Pancreas (tissue), 10 donors: ENCODE measurements at regions of chr13 and their contacts with region 1.

Region 1: GRCh38 chr13:40069173-40070044 is 413.9 kb downstream of the COG6 start:
- DNase-seq: peak; percentile 57 to 83 (median 69)
- ATAC-seq: peak; percentile 86 to 97 (median 94)
- H3K4me3 ChIP-seq: peak overlapping the region in 1 of 4 donors; percentile 15
- H3K27ac ChIP-seq: no peak overlapping the region
- H3K4me1 ChIP-seq: peaks cover 0 to 11% (median 8%) of the 10 kb centered on the region in 3 donors
- H3K27me3 ChIP-seq: no peaks in the 10 kb centered on the region
- CTCF ChIP-seq: peak; percentile 71 to 86 (median 78)

Region 2: DNA sequence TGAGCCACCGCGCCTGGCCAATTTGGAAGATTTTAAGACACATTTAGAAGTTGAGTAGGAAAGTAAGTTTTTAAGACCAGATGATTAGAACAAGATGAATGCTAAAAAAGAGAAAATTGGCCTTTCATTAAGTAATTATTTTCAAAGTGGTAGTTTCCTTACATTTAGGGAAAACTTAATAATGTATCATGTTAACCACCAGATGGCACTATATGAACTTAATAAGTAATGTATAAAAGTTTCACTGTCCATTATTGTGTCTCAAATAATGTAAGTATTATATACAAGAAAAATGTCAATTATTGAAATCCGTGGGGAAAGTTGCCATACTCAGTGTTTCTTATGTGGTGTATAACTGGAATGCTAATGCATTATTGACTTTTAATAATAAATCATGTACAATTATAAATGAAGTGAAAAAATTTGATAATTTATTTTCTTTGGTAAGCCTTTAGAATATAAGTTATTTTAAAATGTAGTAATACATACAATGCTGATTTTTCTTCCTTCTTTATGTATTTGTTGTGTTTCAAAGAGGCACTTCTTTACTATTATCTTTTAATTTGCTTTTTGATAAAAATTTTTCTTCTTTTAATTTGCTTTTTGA is 384.8 kb before region 1 on chr13:
- intact Hi-C with region 1: no loop called
- DNase-seq: no peak
- ATAC-seq: peak in 3 of 4 donors; percentile 61 to 71 (median 66)
- H3K4me3 ChIP-seq: no peak overlapping the region
- H3K27ac ChIP-seq: no peak overlapping the region
- H3K4me1 ChIP-seq: peaks cover 6 to 22% (median 9%) of the 10 kb centered on the region in 3 donors
- H3K27me3 ChIP-seq: no peaks in the 10 kb centered on the region
- CTCF ChIP-seq: peak in 1 of 4 donors; percentile 19

Region 3: DNA sequence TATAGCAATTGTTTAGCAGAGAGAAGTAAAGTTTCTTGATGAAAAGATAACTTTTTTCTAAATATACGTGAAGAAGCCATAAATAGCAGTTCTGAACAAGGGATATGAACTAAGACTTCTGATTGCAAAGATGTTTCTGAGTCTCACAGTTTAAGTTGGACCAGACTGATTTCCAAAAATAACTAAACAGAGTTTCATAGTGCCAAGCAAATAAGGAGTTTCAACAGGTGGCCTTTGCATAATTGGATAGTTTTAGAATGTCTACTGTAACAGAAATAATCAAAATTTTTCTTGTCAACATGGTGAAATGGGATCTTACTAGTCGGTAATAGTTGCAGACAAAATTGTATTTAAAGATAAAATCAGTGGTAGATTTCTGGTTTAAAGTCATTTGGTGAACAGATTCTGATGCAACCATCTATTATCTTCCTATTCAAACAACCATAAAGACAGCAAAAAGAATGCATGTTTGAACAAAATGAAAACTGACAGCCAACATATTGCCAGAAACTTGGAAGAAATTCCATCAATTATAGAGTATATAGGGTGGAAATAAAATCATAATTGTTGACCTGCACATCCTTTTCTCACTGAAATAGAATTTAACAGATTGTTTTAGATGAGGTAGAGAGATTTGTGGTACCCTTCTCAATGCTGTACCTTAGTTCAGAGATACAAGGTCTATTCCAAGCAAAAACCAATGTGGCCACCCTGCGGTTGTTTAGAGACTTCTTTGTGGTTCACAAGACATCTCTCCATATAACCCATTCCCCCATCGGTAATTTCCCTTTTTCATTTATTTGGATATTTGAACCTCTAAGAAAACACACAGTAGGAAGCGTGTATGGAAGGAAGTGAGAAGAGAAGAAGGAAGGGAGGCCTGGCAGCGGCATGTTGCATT is 138.6 kb before region 1 on chr13:
- intact Hi-C with region 1: no loop called
- DNase-seq: no peak
- ATAC-seq: no peak
- H3K4me3 ChIP-seq: no peak overlapping the region
- H3K27ac ChIP-seq: no peak overlapping the region
- H3K4me1 ChIP-seq: no peaks in the 10 kb centered on the region
- H3K27me3 ChIP-seq: no peaks in the 10 kb centered on the region
- CTCF ChIP-seq: no peak

Region 4: GRCh38 chr13:40344270-40345148 is 275.1 kb after region 1 on chr13:
- intact Hi-C with region 1: loop called in 1 of 3 experiments (anchors 10 kb)
- DNase-seq: no peak
- ATAC-seq: peak in 2 of 4 donors; percentile 20 to 28
- H3K4me3 ChIP-seq: no peak overlapping the region
- H3K27ac ChIP-seq: peak overlapping the region in 1 of 4 donors; percentile 0
- H3K4me1 ChIP-seq: peaks cover 7 to 23% (median 12%) of the 10 kb centered on the region in 3 donors
- H3K27me3 ChIP-seq: no peaks in the 10 kb centered on the region
- CTCF ChIP-seq: no peak

Region 5: GRCh38 chr13:40549500-40550094 is 480.2 kb after region 1 on chr13:
- intact Hi-C with region 1: no loop called
- DNase-seq: no peak
- ATAC-seq: no peak
- H3K4me3 ChIP-seq: no peak overlapping the region
- H3K27ac ChIP-seq: no peak overlapping the region
- H3K4me1 ChIP-seq: peaks cover 7 to 15% (median 15%) of the 10 kb centered on the region in 3 donors
- H3K27me3 ChIP-seq: no peaks in the 10 kb centered on the region
- CTCF ChIP-seq: no peak

Region 6: GRCh38 chr13:40682449-40683240 is 613.2 kb after region 1 on chr13:
- intact Hi-C with region 1: loop called (anchors 10 kb)
- DNase-seq: no peak
- ATAC-seq: peak; percentile 51 to 78 (median 62)
- H3K4me3 ChIP-seq: no peak overlapping the region
- H3K27ac ChIP-seq: no peak overlapping the region
- H3K4me1 ChIP-seq: no peaks in the 10 kb centered on the region
- H3K27me3 ChIP-seq: no peaks in the 10 kb centered on the region
- CTCF ChIP-seq: peak; percentile 18 to 53 (median 44)